ENCODE measurements at regions of chr6 and their contacts with region 1.

Region 1: DNA sequence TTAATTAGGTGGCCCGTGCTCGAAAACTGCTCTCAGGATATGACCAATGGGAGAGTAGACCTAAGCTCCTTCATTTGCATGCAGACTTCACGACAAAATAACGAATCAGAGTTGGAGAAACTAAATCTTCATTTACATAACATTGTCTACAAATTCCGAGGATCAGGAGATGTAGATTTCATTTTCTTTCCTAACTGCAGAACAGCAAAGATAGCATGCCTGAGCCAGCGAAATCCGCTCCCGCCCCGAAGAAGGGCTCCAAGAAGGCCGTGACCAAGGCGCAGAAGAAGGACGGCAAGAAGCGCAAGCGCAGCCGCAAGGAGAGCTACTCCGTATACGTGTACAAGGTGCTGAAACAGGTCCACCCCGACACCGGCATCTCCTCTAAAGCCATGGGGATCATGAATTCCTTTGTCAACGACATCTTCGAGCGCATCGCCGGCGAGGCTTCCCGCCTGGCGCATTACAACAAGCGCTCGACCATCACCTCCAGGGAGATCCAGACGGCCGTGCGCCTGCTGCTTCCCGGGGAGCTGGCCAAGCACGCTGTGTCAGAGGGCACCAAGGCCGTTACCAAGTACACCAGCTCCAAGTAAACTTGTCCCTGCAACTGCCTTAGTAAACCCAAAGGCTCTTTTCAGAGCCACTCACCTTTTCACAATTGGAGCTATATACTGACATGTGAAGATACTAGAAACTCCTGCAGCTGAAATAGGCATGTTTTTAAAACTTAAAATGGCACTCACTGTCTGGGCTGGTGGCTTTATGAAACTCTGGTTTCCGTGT is 96.5 kb downstream of the HFE start:
- DNase-seq: peak; percentile 86
- ATAC-seq: peak; percentile 79
- H3K4me3 Mint-ChIP-seq: peak overlapping the region; percentile 81
- H3K27ac Mint-ChIP-seq: peak overlapping the region; percentile 97
- H3K4me1 Mint-ChIP-seq: peaks cover 62% of the 10 kb centered on the region
- H3K27me3 Mint-ChIP-seq: no peaks in the 10 kb centered on the region

Region 2: GRCh38 chr6:26172496-26172958 is 11.2 kb before region 1 on chr6:
- CTCF ChIA-PET with region 1: interaction called, 25 read pairs
- DNase-seq: peak; percentile 57
- ATAC-seq: peak; percentile 52
- H3K4me3 Mint-ChIP-seq: peak overlapping the region; percentile 87
- H3K27ac Mint-ChIP-seq: peak overlapping the region; percentile 100
- H3K4me1 Mint-ChIP-seq: peaks cover 41% of the 10 kb centered on the region
- H3K27me3 Mint-ChIP-seq: no peaks in the 10 kb centered on the region

Region 3: DNA sequence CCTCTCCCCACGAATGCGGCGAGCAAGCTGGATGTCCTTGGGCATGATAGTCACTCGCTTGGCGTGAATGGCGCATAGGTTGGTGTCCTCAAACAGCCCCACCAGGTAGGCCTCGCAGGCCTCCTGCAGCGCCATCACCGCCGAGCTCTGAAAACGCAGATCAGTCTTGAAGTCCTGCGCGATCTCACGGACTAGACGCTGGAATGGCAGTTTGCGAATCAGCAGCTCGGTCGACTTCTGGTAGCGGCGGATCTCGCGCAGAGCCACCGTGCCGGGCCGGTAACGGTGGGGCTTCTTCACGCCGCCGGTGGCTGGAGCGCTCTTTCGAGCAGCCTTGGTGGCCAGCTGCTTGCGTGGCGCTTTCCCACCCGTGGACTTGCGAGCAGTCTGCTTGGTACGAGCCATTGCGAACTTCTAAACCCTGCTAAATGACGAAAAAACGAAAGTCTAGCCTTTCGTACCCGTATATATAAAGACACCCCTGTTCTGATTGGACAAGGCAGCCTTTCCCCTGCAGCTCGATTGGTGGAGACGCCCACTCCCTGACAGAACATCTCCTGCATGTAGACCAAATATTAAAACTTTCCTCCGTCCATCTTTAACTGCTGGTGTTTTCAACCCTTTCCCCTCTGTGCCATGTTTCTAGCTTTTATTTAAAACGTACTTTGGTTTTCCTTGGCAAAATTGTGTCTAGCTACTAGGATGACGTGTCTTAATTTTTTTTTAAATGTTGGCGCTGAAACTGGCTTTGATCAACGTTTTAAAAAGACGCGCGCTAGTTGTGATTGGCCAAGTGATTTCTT is 13.3 kb after region 1 on chr6:
- CTCF ChIA-PET with region 1: interaction called, 23 read pairs
- DNase-seq: peak; percentile 91
- ATAC-seq: peak; percentile 43
- H3K4me3 Mint-ChIP-seq: peak overlapping the region; percentile 87
- H3K27ac Mint-ChIP-seq: peak overlapping the region; percentile 98
- H3K4me1 Mint-ChIP-seq: peaks cover 42% of the 10 kb centered on the region
- H3K27me3 Mint-ChIP-seq: no peaks in the 10 kb centered on the region

Measured in activated CD8-positive, alpha-beta memory T cell treated with anti-CD3 and anti-CD28 coated beads, Interleukin-2, amount 10 ng/mL, durations not matched to agents 7 days and 5 days (primary cell).